Activated CD8-positive, alpha-beta T cell treated with anti-CD3 and anti-CD28 coated beads, Interleukin-2, amount 10 ng/mL, durations not matched to agents 7 days and 5 days (primary cell): ENCODE measurements at regions of chr13 and their contacts with region 1.

Region 1: GRCh38 chr13:31919971-31920726 is 111.4 kb upstream of the FRY start:
- DNase-seq: no peak
- ATAC-seq: no peak
- H3K4me3 Mint-ChIP-seq: no peak overlapping the region
- H3K27ac Mint-ChIP-seq: no peak overlapping the region
- H3K4me1 Mint-ChIP-seq: peaks cover 6% of the 10 kb centered on the region
- H3K27me3 Mint-ChIP-seq: peaks cover 12% of the 10 kb centered on the region

Region 2: GRCh38 chr13:31930901-31931522 is 10.9 kb after region 1 on chr13:
- CTCF ChIA-PET with region 1: interaction called, 10 read pairs
- POLR2A ChIA-PET with region 1: no interaction called
- DNase-seq: no peak
- ATAC-seq: peak; percentile 76
- H3K4me3 Mint-ChIP-seq: no peak overlapping the region
- H3K27ac Mint-ChIP-seq: no peak overlapping the region
- H3K4me1 Mint-ChIP-seq: peaks cover 2% of the 10 kb centered on the region
- H3K27me3 Mint-ChIP-seq: peaks cover 3% of the 10 kb centered on the region